Caco-2 (cell line): ENCODE measurements at regions of chr4 and their contacts with region 1.

Region 1: GRCh38 chr4:18021722-18022571 is at the start of gene LCORL:
- DNase-seq: peak; percentile 91 to 94
- H3K4me3 ChIP-seq: peak within 1 kb of the TSS; percentile 80
- H3K4me3 Mint-ChIP-seq: peak within 1 kb of the TSS; percentile 97
- H3K27ac Mint-ChIP-seq: peak within 1 kb of the TSS; percentile 87
- H3K4me1 ChIP-seq: no peaks in the 10 kb centered on the region
- H3K4me1 Mint-ChIP-seq: peaks cover 8% of the 10 kb centered on the region
- H3K27me3 ChIP-seq: no peaks in the 10 kb centered on the region
- H3K27me3 Mint-ChIP-seq: peaks cover 3% of the 10 kb centered on the region
- CTCF ChIP-seq: no peak
- total RNA-seq, gene LCORL: 9.3 and 11.3 TPM in 2 replicates

Region 2: DNA sequence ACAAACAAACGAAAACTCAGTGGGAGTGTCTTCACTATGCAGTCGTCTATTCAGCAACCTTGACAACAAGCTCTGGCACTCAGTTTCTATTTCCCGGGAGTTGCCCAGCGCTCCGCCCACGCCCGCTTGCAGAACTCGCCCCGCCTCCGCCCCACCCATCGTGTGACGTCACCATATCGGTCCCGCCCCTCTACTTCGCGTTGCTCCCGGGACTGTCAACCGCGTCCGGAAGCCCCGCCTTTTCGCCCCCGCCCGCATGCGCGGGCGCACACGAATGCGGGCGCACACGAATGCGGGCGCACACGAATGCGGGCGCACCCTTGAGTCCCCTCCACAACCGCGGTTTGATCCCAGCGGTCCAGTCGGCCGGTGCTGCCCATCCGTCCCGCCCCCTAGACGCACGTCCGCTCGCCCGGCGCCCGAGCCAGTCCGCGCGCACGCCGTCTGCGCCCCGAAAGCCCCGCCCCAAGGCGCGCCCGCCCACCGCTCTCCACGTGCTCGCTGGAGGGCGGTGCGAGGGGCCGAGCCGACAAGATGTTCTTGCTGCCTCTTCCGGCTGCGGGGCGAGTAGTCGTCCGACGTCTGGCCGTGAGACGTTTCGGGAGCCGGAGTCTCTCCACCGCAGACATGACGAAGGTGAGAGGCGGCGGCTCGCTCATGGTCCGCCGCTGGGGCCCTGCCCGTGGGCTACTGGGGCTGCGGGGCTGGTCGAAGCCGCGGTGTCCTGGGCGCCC is 444.8 kb before region 1 on chr4 and contains the start of gene LAP3:
- CTCF ChIA-PET with region 1: no interaction called
- POLR2A ChIA-PET with region 1: no interaction called
- intact Hi-C with region 1: loop called (anchors 5 kb)
- DNase-seq: peak; percentile 96 to 97
- H3K4me3 ChIP-seq: peak within 1 kb of the TSS; percentile 77
- H3K4me3 Mint-ChIP-seq: peak within 1 kb of the TSS; percentile 84
- H3K27ac Mint-ChIP-seq: peak within 1 kb of the TSS; percentile 88
- H3K4me1 ChIP-seq: peaks cover 16% of the 10 kb centered on the region
- H3K4me1 Mint-ChIP-seq: peaks cover 8% of the 10 kb centered on the region
- H3K27me3 ChIP-seq: no peaks in the 10 kb centered on the region
- H3K27me3 Mint-ChIP-seq: no peaks in the 10 kb centered on the region
- CTCF ChIP-seq: no peak
- total RNA-seq, gene LAP3: 62.7 and 65.4 TPM in 2 replicates

Region 3: DNA sequence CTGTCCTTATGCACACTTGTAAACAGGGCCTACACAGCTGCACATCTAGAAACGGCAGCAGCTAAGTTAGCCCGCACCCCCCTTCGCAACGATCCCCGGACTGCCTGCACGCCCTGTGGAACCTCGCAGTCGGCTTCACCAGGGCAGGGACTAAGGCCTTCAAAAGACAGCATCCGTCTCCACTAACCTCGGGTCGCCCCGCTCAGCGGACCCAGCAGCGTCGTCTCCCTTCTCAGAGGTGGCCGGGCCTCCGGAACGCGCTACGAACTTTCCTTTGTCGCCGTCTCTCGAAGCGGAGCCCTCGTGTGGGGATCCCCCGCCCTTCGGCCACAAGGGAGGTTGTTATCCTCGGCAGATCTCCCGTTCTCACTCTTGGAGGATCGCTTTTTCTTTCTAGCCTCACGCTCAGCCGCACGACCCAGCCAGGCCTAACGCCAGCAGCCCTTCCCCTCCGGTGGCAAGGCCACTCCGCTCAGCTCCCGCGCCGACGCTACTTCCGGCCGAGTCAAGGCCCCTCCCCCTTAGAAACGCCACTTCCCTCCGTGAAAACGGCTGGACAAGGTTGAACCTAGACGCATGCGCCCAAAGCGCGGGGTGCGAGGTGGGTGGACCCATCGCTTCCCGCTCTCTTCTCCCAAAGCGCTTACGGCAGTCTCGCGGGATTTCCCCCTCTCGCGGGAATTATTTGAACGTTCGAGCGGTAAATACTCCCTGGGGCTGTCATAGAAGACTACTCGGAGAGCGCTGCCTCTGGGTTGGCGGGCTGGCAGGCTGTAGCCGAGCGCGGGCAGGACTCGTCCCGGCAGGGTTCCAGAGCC is 211.5 kb before region 1 on chr4 and contains the starts of genes DCAF16 and NCAPG:
- CTCF ChIA-PET with region 1: no interaction called
- POLR2A ChIA-PET with region 1: interaction called, 4 read pairs
- intact Hi-C with region 1: loop called (anchors 2 kb)
- DNase-seq: peak; percentile 99
- H3K4me3 ChIP-seq: peak within 1 kb of the TSS; percentile 94
- H3K4me3 Mint-ChIP-seq: peak within 1 kb of the TSS; percentile 90
- H3K27ac Mint-ChIP-seq: peak within 1 kb of the TSS; percentile 95
- H3K4me1 ChIP-seq: peaks cover 5% of the 10 kb centered on the region; the same call in 1 of the 2 replicates
- H3K4me1 Mint-ChIP-seq: peaks cover 24% of the 10 kb centered on the region
- H3K27me3 ChIP-seq: no peaks in the 10 kb centered on the region
- H3K27me3 Mint-ChIP-seq: no peaks in the 10 kb centered on the region
- CTCF ChIP-seq: no peak
- total RNA-seq, gene DCAF16: 52.3 and 55.3 TPM in 2 replicates
- total RNA-seq, gene NCAPG: 48.9 and 54.0 TPM in 2 replicates

Region 4: DNA sequence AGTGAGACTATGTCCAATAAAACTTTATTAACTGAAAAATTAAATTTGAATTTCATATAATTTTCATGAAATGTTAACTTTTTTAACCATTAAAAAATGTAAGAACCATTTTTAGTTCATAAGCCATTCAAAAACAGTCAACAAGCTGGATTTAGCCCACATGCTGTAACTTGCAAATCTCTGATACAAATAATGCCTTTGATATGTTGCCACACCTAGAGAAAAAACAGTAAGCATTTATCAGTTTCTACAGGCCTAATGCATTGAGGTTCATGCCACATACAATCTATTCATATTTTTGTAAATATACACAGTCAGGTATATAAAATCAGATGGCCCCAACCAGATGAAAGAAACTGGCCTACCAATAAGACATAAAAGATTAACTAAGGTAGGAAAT is 53.2 kb before region 1 on chr4:
- CTCF ChIA-PET with region 1: no interaction called
- POLR2A ChIA-PET with region 1: no interaction called
- intact Hi-C with region 1: loop called (anchors 2 kb)
- DNase-seq: no peak
- H3K4me3 ChIP-seq: no peak overlapping the region
- H3K4me3 Mint-ChIP-seq: no peak overlapping the region
- H3K27ac Mint-ChIP-seq: no peak overlapping the region
- H3K4me1 ChIP-seq: no peaks in the 10 kb centered on the region
- H3K4me1 Mint-ChIP-seq: no peaks in the 10 kb centered on the region
- H3K27me3 ChIP-seq: no peaks in the 10 kb centered on the region
- H3K27me3 Mint-ChIP-seq: no peaks in the 10 kb centered on the region
- CTCF ChIP-seq: no peak

Region 5: DNA sequence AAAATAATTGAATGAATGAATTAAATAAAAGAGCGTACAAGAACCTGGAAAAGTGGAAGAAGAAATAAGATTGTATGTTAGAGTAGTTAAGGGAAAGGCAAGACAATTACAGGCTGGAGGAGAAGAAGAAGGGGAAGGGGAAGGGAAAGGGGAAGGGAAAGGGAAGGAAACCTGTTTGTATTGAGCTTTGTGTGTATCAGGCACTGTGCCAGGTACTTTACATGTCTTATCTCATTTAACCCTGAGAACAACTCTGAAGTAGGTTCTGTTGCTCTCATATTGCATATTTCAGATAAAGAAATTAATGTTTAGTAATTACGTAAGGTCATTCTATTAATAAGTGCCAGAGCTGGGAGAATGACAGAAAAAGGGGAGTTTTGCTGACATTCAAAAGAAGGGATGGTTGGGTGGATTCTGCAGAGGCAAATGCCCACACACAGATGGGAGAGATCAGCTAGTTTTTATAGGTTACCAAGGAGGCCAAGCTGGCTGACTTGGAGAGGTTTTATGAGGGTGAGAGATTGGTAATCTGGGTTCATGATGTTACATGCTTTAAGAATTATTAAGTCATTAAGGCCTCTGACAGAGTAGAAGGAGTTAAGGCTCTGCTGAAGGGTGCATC is 91.9 kb after region 1 on chr4:
- CTCF ChIA-PET with region 1: no interaction called
- POLR2A ChIA-PET with region 1: no interaction called
- intact Hi-C with region 1: loop called (anchors 2 kb)
- DNase-seq: no peak
- H3K4me3 ChIP-seq: no peak overlapping the region
- H3K4me3 Mint-ChIP-seq: no peak overlapping the region
- H3K27ac Mint-ChIP-seq: no peak overlapping the region
- H3K4me1 ChIP-seq: no peaks in the 10 kb centered on the region
- H3K4me1 Mint-ChIP-seq: peaks cover 5% of the 10 kb centered on the region
- H3K27me3 ChIP-seq: no peaks in the 10 kb centered on the region
- H3K27me3 Mint-ChIP-seq: peaks cover 6% of the 10 kb centered on the region
- CTCF ChIP-seq: no peak

Region 6: GRCh38 chr4:18388039-18388438 is 366.1 kb after region 1 on chr4:
- CTCF ChIA-PET with region 1: no interaction called
- POLR2A ChIA-PET with region 1: no interaction called
- intact Hi-C with region 1: loop called (anchors 1 kb)
- DNase-seq: peak in 1 of 2 experiments; percentile 39
- H3K4me3 ChIP-seq: no peak overlapping the region
- H3K4me3 Mint-ChIP-seq: peak overlapping the region; percentile 18
- H3K27ac Mint-ChIP-seq: peak overlapping the region; percentile 38
- H3K4me1 ChIP-seq: no peaks in the 10 kb centered on the region; the same call in 1 of the 2 replicates
- H3K4me1 Mint-ChIP-seq: peaks cover 7% of the 10 kb centered on the region
- H3K27me3 ChIP-seq: no peaks in the 10 kb centered on the region
- H3K27me3 Mint-ChIP-seq: no peaks in the 10 kb centered on the region
- CTCF ChIP-seq: no peak